ENCODE measurements at regions of chr18 and their contacts with region 1.

Region 1: DNA sequence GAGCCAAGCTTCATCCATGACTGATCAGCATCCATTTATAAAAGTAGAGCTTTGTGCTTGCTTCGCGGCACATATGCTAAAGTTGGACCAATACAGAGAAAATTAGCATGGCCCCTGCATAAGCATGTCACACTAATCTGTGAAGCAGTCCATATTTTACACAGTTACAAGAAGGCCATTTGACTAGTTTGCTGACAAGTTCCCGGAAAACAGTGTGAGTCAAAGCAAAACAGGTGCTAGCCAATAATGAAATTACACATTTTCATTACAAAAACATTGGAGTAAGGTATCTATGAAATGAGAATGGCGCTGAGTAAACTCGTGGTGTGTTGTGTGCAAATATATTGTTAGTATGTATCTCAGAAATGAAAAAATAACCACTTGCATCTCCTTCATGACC is 4.7 kb downstream of the ANKRD62 start:
- DNase-seq: no peak
- ATAC-seq: no peak
- H3K4me3 ChIP-seq: no peak overlapping the region
- H3K27ac ChIP-seq: no peak overlapping the region
- H3K4me1 ChIP-seq: no peaks in the 10 kb centered on the region
- H3K27me3 ChIP-seq: peaks cover 5 to 7% of the 10 kb centered on the region in 2 experiments; a peak in 4 of 5 replicates
- CTCF ChIP-seq: no peak
- EP300 ChIP-seq: no peak
- POLR2A ChIP-seq: no peak
- RAD21 ChIP-seq: no peak

Region 2: GRCh38 chr18:12038639-12039417 is 59.5 kb before region 1 on chr18:
- CTCF ChIA-PET with region 1: no interaction called
- POLR2A ChIA-PET with region 1: no interaction called
- in situ Hi-C with region 1: no loop called
- intact Hi-C with region 1: no loop called
- DNase-seq: peak; percentile 72 to 84 (median 80)
- ATAC-seq: peak; percentile 96
- H3K4me3 ChIP-seq: peak overlapping the region; percentile 31; the same call in 1 of the 2 replicates
- H3K27ac ChIP-seq: no peak overlapping the region
- H3K4me1 ChIP-seq: peaks cover 0 to 13% of the 10 kb centered on the region in 2 experiments; a peak in 2 of 5 replicates
- H3K27me3 ChIP-seq: peaks cover 4 to 38% of the 10 kb centered on the region in 2 experiments; a peak in 4 of 5 replicates
- CTCF ChIP-seq: peak; percentile 89 to 93 (median 90)
- EP300 ChIP-seq: no peak
- POLR2A ChIP-seq: no peak
- RAD21 ChIP-seq: peak; percentile 92 to 96

Region 3: DNA sequence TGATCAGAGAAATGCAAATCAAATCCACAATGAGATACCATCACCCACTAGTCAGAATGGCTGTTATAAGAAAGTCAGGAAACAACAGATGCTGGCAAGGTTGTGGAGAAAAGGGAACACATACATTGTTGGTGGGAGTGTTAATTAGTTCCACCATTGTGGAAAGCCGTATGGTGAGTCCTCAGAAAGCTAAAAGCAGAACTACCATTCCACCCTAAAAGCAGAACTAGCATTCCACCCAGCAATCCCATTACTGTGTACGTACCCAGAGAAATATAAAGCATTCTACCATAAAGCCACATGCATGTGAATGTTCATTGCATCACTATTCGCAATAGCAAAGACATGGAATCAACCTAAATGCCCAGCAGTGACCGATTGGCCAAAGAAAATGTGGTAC is 56.0 kb after region 1 on chr18:
- CTCF ChIA-PET with region 1: no interaction called
- POLR2A ChIA-PET with region 1: no interaction called
- in situ Hi-C with region 1: loop called (anchors 5 kb)
- intact Hi-C with region 1: no loop called
- DNase-seq: no peak
- ATAC-seq: no peak
- H3K4me3 ChIP-seq: no peak overlapping the region
- H3K27ac ChIP-seq: no peak overlapping the region
- H3K4me1 ChIP-seq: no peaks in the 10 kb centered on the region
- H3K27me3 ChIP-seq: 0 out of 5 replicates have a peak, but pooled peaks cover 0 to 4% of the 10 kb centered on the region in 2 experiments
- CTCF ChIP-seq: no peak
- EP300 ChIP-seq: no peak
- POLR2A ChIP-seq: no peak
- RAD21 ChIP-seq: no peak

Region 4: DNA sequence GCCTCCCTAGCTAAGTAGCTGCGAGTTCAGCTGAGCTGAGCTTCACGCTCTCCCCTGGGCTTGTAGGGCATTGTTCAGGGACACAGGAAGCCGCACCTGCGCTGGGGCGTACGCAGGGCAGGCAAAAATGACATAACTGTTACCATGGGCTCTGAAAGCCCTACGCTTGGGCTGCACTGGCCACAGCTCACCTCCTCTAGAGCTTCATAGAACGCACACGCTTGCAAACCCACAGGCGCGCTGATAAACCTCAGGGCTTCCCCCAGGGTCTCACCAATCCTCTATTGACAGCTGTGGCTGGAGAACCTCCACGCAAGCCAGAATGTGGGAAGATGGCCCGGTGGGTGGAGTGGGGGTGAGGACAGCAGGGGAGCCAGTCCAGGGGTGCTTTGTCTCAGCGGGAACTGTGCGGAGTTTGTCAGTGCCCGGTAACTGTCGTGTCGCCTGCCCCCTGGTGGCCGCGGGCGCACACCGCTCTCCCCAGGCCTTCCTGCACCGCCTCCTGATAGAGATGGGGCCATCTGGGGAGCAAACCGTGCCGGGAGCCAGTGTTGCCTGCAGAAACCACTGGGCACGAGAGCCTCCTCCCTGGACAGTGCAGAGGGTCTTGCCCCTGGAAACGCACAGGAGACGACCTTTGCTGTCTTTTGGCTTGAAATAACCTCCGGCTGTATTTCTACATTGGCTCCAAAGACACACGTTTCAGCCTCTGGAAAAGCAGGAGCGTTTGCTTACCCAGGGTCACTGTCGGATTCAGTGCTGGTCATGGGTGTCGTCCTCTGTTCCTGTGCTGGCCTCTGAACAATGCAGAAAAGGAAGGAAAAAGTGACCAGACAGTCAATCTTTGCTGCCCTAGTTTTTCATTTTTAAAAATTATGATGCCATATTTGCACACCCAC is 138.8 kb after region 1 on chr18:
- CTCF ChIA-PET with region 1: interaction called, 5 read pairs
- POLR2A ChIA-PET with region 1: no interaction called
- in situ Hi-C with region 1: loop called (anchors 5 kb)
- intact Hi-C with region 1: loop called (anchors 2 kb)
- DNase-seq: peak; percentile 76 to 85 (median 82)
- ATAC-seq: peak; percentile 99
- H3K4me3 ChIP-seq: no peak overlapping the region; the same call in 1 of the 2 replicates
- H3K27ac ChIP-seq: no peak overlapping the region
- H3K4me1 ChIP-seq: peaks cover 19 to 22% of the 10 kb centered on the region in 2 experiments
- H3K27me3 ChIP-seq: peaks cover 17 to 18% of the 10 kb centered on the region in 2 experiments
- CTCF ChIP-seq: peak; percentile 89 to 96 (median 91)
- EP300 ChIP-seq: no peak
- POLR2A ChIP-seq: no peak
- RAD21 ChIP-seq: peak; percentile 83 to 92

Measured in K562 (cell line).